GM12878 (cell line): ENCODE measurements at regions of chr16 and their contacts with region 1.

Region 1: GRCh38 chr16:17467923-17468540 is 2.7 kb downstream of the XYLT1 start:
- DNase-seq: no peak
- ATAC-seq: peak; percentile 65
- H3K4me3 ChIP-seq: peak overlapping the region; percentile 68; the same call in 1 of the 2 replicates
- H3K27ac ChIP-seq: no peak overlapping the region
- H3K4me1 ChIP-seq: peaks cover 17% of the 10 kb centered on the region
- H3K27me3 ChIP-seq: peaks cover 0 to 3% of the 10 kb centered on the region in 2 experiments; a peak in 3 of 4 replicates
- CTCF ChIP-seq: peak; percentile 72 to 76 (median 72)
- EP300 ChIP-seq: no peak
- POLR2A ChIP-seq: no peak
- RAD21 ChIP-seq: peak; percentile 84

Region 2: DNA sequence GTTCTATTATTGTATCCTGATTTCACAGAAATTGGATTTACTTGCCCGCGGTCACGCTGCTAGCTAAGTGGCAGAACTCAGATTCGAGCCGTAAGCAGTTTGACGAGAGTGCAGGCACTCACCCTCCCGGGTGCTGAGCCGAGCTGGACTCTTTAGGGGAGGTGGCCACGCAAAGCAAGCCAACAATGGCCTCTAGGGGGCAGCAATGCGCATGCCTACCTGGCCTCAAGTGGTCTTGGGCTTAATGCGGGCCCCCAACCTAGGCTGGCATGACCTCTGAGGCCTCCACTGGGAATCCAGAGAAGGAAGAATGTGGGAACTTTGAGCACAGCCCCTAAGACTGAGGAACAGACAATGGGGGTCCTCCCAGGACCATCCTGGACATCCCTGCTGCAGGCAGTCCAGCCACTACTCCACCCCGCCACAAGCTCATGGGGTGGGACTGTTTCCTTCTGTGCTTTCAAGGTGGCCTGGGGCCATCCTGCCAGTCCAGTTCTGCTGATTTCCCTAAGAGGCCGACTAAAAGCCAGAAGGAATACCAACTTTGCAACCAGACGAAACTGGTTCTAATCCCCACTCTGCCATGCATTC is 273.7 kb before region 1 on chr16:
- CTCF ChIA-PET with region 1: interaction called, 16 read pairs
- POLR2A ChIA-PET with region 1: no interaction called
- RAD21 ChIA-PET with region 1: interaction called, 10 read pairs
- SMC1A ChIA-PET with region 1: interaction called, 11 read pairs
- in situ Hi-C with region 1: no loop called
- intact Hi-C with region 1: no loop called
- DNase-seq: no peak
- ATAC-seq: peak; percentile 82
- H3K4me3 ChIP-seq: no peak overlapping the region
- H3K27ac ChIP-seq: no peak overlapping the region
- H3K4me1 ChIP-seq: no peaks in the 10 kb centered on the region
- H3K27me3 ChIP-seq: no peaks in the 10 kb centered on the region
- CTCF ChIP-seq: peak; percentile 53 to 87 (median 69)
- EP300 ChIP-seq: no peak
- POLR2A ChIP-seq: no peak
- RAD21 ChIP-seq: peak; percentile 60

Region 3: GRCh38 chr16:17252064-17252463 is 216.0 kb before region 1 on chr16:
- CTCF ChIA-PET with region 1: interaction called, 57 read pairs
- POLR2A ChIA-PET with region 1: interaction called, 3 read pairs
- RAD21 ChIA-PET with region 1: interaction called, 51 read pairs
- SMC1A ChIA-PET with region 1: interaction called, 49 read pairs
- in situ Hi-C with region 1: loop called (anchors 5 kb)
- intact Hi-C with region 1: loop called (anchors 5 kb)
- DNase-seq: no peak
- ATAC-seq: peak; percentile 83
- H3K4me3 ChIP-seq: no peak overlapping the region
- H3K27ac ChIP-seq: no peak overlapping the region
- H3K4me1 ChIP-seq: peaks cover 13% of the 10 kb centered on the region
- H3K27me3 ChIP-seq: no peaks in the 10 kb centered on the region
- CTCF ChIP-seq: no peak
- EP300 ChIP-seq: no peak
- POLR2A ChIP-seq: no peak
- RAD21 ChIP-seq: no peak

Region 4: DNA sequence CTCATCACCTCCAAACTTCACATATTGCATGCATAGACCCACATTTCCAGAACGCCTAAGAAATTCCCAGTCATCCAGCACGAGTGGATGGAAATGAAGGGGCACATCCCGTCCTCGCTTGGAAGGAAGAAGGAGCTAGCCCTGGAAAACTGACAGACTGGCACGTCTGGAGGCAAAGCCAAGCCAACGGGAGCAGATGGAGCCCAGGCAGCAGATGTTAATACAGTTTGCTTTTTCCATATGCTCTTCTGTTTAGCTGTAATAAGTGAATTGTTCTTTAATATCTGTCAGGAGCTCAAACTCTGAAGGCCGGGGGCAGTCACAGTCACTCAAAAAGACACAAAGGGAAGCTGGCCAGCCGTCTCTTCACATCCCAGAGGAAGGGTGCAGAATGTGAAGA is 185.0 kb before region 1 on chr16:
- CTCF ChIA-PET with region 1: interaction called, 62 read pairs
- POLR2A ChIA-PET with region 1: interaction called, 8 read pairs
- RAD21 ChIA-PET with region 1: interaction called, 62 read pairs
- SMC1A ChIA-PET with region 1: interaction called, 73 read pairs
- in situ Hi-C with region 1: no loop called
- intact Hi-C with region 1: loop called (anchors 5 kb)
- DNase-seq: no peak
- ATAC-seq: no peak
- H3K4me3 ChIP-seq: no peak overlapping the region
- H3K27ac ChIP-seq: no peak overlapping the region
- H3K4me1 ChIP-seq: peaks cover 23% of the 10 kb centered on the region
- H3K27me3 ChIP-seq: no peaks in the 10 kb centered on the region
- CTCF ChIP-seq: no peak
- EP300 ChIP-seq: no peak
- POLR2A ChIP-seq: no peak
- RAD21 ChIP-seq: no peak

Region 5: DNA sequence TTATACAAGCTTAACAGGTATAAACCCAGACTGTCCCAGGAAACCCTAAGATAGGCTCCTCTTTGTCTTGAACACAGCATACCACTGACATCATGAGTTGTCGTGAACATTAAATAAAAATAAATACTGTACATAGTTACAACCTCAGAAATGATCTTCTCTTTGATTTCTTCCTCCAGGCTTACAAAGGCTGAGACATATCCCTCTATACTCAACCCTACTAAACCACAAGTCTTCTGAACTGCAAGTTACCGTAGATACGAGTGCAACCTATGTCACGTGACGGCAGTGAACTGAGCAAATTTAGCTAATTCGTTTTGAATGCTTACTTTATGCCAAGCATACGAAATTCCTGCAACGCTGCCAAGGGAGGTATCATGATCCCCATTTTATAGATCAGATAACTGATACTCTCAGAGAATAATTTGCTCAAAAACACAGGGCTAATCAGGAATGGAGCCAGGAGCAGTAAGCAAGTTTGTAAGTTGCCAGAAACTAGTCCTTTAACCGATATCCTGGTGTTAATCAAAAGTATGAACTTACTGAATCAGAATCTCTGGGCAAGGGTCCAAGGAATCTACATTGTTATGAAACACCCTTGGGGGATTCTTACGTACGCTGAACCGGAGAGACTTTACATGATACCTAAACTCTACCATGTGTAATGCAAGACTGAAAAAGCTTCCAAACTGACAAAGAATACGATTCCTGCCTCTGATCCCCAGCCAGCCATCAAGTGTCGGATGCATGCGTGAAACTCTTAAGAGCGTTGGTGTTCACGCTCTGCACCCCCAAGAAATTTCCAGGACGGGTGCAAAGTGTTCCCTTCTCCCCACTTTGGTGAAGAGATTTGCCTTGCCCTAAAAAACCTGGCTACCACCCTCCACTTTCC is 103.5 kb before region 1 on chr16:
- CTCF ChIA-PET with region 1: interaction called, 27 read pairs
- POLR2A ChIA-PET with region 1: interaction called, 3 read pairs
- RAD21 ChIA-PET with region 1: interaction called, 24 read pairs
- SMC1A ChIA-PET with region 1: interaction called, 37 read pairs
- in situ Hi-C with region 1: no loop called
- intact Hi-C with region 1: loop called (anchors 5 kb)
- DNase-seq: no peak
- ATAC-seq: no peak
- H3K4me3 ChIP-seq: no peak overlapping the region
- H3K27ac ChIP-seq: no peak overlapping the region
- H3K4me1 ChIP-seq: peaks cover 39% of the 10 kb centered on the region
- H3K27me3 ChIP-seq: no peaks in the 10 kb centered on the region
- CTCF ChIP-seq: no peak
- EP300 ChIP-seq: no peak
- POLR2A ChIP-seq: no peak
- RAD21 ChIP-seq: no peak

Region 6: GRCh38 chr16:17404941-17405689 is 62.9 kb before region 1 on chr16:
- CTCF ChIA-PET with region 1: interaction called, 20 read pairs
- POLR2A ChIA-PET with region 1: interaction called, 3 read pairs
- RAD21 ChIA-PET with region 1: interaction called, 26 read pairs
- SMC1A ChIA-PET with region 1: interaction called, 12 read pairs
- in situ Hi-C with region 1: no loop called
- intact Hi-C with region 1: no loop called
- DNase-seq: no peak
- ATAC-seq: no peak
- H3K4me3 ChIP-seq: no peak overlapping the region
- H3K27ac ChIP-seq: no peak overlapping the region
- H3K4me1 ChIP-seq: peaks cover 24% of the 10 kb centered on the region
- H3K27me3 ChIP-seq: no peaks in the 10 kb centered on the region
- CTCF ChIP-seq: no peak
- EP300 ChIP-seq: no peak
- POLR2A ChIP-seq: no peak
- RAD21 ChIP-seq: no peak

Region 7: DNA sequence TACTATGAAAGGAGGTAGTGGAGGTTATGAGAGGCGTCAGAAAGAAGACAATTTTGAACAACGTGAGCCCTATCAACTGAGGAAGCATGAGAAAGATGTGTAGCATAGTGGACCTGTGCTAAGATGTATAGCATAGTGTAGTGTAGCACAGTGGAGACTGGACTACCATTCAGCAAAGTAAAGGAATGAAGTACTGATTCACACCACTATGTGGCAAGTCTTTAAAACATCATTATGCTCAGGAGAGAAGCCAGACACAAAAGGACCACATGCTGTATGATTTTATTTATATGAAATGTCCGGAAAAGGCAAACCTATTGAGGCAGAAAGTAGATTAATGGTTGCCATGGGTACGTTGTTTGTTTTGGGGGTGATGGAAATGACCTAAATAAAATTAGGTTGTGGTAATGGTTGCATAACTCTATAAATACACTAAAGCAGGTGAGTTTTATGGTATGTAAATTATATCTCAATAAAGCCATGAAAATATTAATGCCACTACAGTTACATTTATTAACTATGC is 23.2 kb after region 1 on chr16:
- CTCF ChIA-PET with region 1: no interaction called
- POLR2A ChIA-PET with region 1: no interaction called
- RAD21 ChIA-PET with region 1: no interaction called
- SMC1A ChIA-PET with region 1: no interaction called
- in situ Hi-C with region 1: no loop called
- intact Hi-C with region 1: no loop called
- DNase-seq: no peak
- ATAC-seq: peak; percentile 58
- H3K4me3 ChIP-seq: no peak overlapping the region
- H3K27ac ChIP-seq: no peak overlapping the region
- H3K4me1 ChIP-seq: no peaks in the 10 kb centered on the region
- H3K27me3 ChIP-seq: no peaks in the 10 kb centered on the region
- CTCF ChIP-seq: no peak
- EP300 ChIP-seq: no peak
- POLR2A ChIP-seq: no peak
- RAD21 ChIP-seq: no peak

Region 8: GRCh38 chr16:17578921-17579874 is 111.2 kb after region 1 on chr16:
- CTCF ChIA-PET with region 1: interaction called, 18 read pairs
- POLR2A ChIA-PET with region 1: no interaction called
- RAD21 ChIA-PET with region 1: interaction called, 7 read pairs
- SMC1A ChIA-PET with region 1: interaction called, 19 read pairs
- in situ Hi-C with region 1: no loop called
- intact Hi-C with region 1: no loop called
- DNase-seq: peak; percentile 28
- ATAC-seq: peak; percentile 93
- H3K4me3 ChIP-seq: no peak overlapping the region
- H3K27ac ChIP-seq: no peak overlapping the region
- H3K4me1 ChIP-seq: no peaks in the 10 kb centered on the region
- H3K27me3 ChIP-seq: no peaks in the 10 kb centered on the region
- CTCF ChIP-seq: peak; percentile 83 to 89 (median 84)
- EP300 ChIP-seq: no peak
- POLR2A ChIP-seq: no peak
- RAD21 ChIP-seq: peak; percentile 82

Region 9: DNA sequence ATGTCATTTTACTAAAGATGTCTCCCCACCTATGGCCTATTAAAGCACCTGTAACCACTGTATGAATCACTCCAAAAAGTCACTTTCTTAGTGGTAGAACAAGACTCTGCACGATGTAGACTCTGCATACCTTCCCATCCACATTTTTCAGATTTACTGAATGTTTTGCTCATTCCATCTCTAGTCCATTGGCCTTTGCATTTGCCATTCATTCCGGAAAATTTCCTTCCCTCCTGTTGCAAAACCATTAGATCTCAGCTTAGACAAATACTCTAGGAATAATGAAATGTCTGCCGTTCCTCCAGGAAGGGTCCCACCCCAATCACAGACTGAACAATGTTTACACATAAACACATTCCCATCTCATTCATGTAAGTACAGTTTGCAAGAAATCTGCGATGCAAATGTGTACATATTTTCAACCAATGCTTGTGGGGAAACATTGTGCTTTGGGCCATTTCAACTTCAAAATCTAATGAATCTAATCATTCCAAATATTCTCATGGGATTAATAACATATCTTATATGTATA is 149.1 kb after region 1 on chr16:
- CTCF ChIA-PET with region 1: no interaction called
- POLR2A ChIA-PET with region 1: no interaction called
- RAD21 ChIA-PET with region 1: no interaction called
- SMC1A ChIA-PET with region 1: no interaction called
- in situ Hi-C with region 1: no loop called
- intact Hi-C with region 1: no loop called
- DNase-seq: no peak
- ATAC-seq: no peak
- H3K4me3 ChIP-seq: no peak overlapping the region
- H3K27ac ChIP-seq: no peak overlapping the region
- H3K4me1 ChIP-seq: no peaks in the 10 kb centered on the region
- H3K27me3 ChIP-seq: no peaks in the 10 kb centered on the region; a peak in 2 of 4 replicates
- CTCF ChIP-seq: no peak
- EP300 ChIP-seq: no peak
- POLR2A ChIP-seq: no peak
- RAD21 ChIP-seq: no peak